Naive thymus-derived CD4-positive, alpha-beta T cell (primary cell): ENCODE measurements at regions of chr6 and their contacts with region 1.

Region 1: GRCh38 chr6:105424175-105424783 is 21.4 kb upstream of the PREP start:
- DNase-seq: peak; percentile 11 to 62 (median 45)
- ATAC-seq: peak; percentile 85
- H3K4me3 ChIP-seq: no peak overlapping the region
- H3K4me3 Mint-ChIP-seq: no peak overlapping the region
- H3K27ac ChIP-seq: no peak overlapping the region
- H3K27ac Mint-ChIP-seq: no peak overlapping the region
- H3K4me1 ChIP-seq: no peaks in the 10 kb centered on the region
- H3K4me1 Mint-ChIP-seq: peaks cover 0 to 3% (median 0%) of the 10 kb centered on the region in 7 donors
- H3K27me3 ChIP-seq: no peaks in the 10 kb centered on the region
- H3K27me3 Mint-ChIP-seq: peaks cover 0 to 19% (median 4%) of the 10 kb centered on the region in 5 donors

Region 2: GRCh38 chr6:105087571-105088211 is 336.6 kb before region 1 on chr6:
- CTCF ChIA-PET with region 1: interaction called, 15 read pairs
- POLR2A ChIA-PET with region 1: no interaction called
- intact Hi-C with region 1: loop called in 1 of 2 experiments (anchors 1 kb)
- DNase-seq: peak in 6 of 9 donors; percentile 11 to 43 (median 32)
- ATAC-seq: peak; percentile 67
- H3K4me3 ChIP-seq: no peak overlapping the region
- H3K4me3 Mint-ChIP-seq: no peak overlapping the region
- H3K27ac ChIP-seq: no peak overlapping the region
- H3K27ac Mint-ChIP-seq: no peak overlapping the region
- H3K4me1 ChIP-seq: no peaks in the 10 kb centered on the region
- H3K4me1 Mint-ChIP-seq: no peaks in the 10 kb centered on the region
- H3K27me3 ChIP-seq: no peaks in the 10 kb centered on the region
- H3K27me3 Mint-ChIP-seq: peaks cover 4 to 10% (median 6%) of the 10 kb centered on the region in 5 donors